ENCODE measurements at regions of chr17 and their contacts with region 1.

Region 1: GRCh38 chr17:4004517-4005295 is 40.5 kb upstream of the ATP2A3 start:
- DNase-seq: no peak
- H3K4me3 ChIP-seq: no peak overlapping the region
- H3K27ac ChIP-seq: no peak overlapping the region
- H3K4me1 ChIP-seq: peaks cover 14% of the 10 kb centered on the region
- H3K27me3 ChIP-seq: no peaks in the 10 kb centered on the region
- CTCF ChIP-seq: peak; percentile 72 to 93 (median 84)
- POLR2A ChIP-seq: no peak

Region 2: GRCh38 chr17:3865176-3865575 is 139.5 kb before region 1 on chr17:
- intact Hi-C with region 1: loop called (anchors 5 kb)
- DNase-seq: no peak
- H3K4me3 ChIP-seq: no peak overlapping the region
- H3K27ac ChIP-seq: peak overlapping the region; percentile 49
- H3K4me1 ChIP-seq: peaks cover 9% of the 10 kb centered on the region
- H3K27me3 ChIP-seq: no peaks in the 10 kb centered on the region
- CTCF ChIP-seq: no peak
- POLR2A ChIP-seq: no peak

Region 3: GRCh38 chr17:3913531-3914311 is 91.0 kb before region 1 on chr17:
- intact Hi-C with region 1: loop called (anchors 2 kb)
- DNase-seq: no peak
- H3K4me3 ChIP-seq: peak overlapping the region in 1 of 2 donors; percentile 30
- H3K27ac ChIP-seq: no peak overlapping the region
- H3K4me1 ChIP-seq: peaks cover 27% of the 10 kb centered on the region
- H3K27me3 ChIP-seq: no peaks in the 10 kb centered on the region
- CTCF ChIP-seq: peak; percentile 86 to 96 (median 93)
- POLR2A ChIP-seq: no peak

Measured in vagina (tissue), 2 donors.